ENCODE measurements at regions of chr2 and their contacts with region 1.

Region 1: DNA sequence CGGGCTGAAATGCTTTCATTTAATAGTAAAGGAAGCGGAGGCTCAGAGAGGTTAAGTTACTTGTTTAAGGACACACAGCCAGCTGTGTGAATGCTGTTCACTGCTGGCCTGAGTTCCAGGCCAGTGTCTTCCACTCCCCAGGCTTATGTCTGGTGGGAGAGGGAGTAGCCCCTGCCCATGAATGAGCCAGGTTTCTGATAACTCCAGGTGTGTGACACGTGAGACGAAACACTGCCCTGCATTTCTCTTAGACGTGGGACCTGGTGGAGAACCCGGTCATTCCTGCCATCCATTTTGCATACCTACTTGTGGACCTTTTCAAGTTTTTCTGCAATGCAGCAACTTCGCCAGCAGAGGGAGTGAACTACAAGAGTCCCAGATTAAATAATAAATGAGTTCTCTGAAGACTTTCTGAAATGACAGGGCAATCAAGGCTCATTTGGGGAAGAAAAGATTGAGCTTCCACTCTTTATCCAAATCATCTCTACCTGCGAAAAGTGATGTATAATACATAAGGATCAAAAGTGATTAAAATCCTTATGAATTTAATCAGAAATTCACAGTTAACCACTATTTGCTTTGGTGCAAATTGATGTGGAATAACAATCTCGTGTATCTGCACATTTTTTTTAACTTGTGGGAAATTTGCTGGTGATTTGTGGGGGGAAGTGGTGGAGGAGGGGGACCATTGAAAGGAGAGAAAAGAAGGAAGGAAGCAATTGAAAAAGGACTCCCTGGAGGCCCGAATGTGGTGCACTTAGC is 79.4 kb upstream of the ASB18 start:
- DNase-seq: peak in 1 of 2 donors; percentile 53
- H3K4me3 ChIP-seq: no peak overlapping the region
- H3K27ac ChIP-seq: no peak overlapping the region
- H3K4me1 ChIP-seq: no peaks in the 10 kb centered on the region
- H3K27me3 ChIP-seq: no peaks in the 10 kb centered on the region
- CTCF ChIP-seq: peak; percentile 28 to 79 (median 70)
- POLR2A ChIP-seq: no peak

Region 2: GRCh38 chr2:235195921-235196320 is 1147.7 kb before region 1 on chr2:
- intact Hi-C with region 1: loop called (anchors 5 kb)
- DNase-seq: no peak
- H3K4me3 ChIP-seq: no peak overlapping the region
- H3K27ac ChIP-seq: no peak overlapping the region
- H3K4me1 ChIP-seq: no peaks in the 10 kb centered on the region
- H3K27me3 ChIP-seq: peaks cover 0 to 4% of the 10 kb centered on the region in 2 donors
- CTCF ChIP-seq: no peak
- POLR2A ChIP-seq: no peak

Region 3: DNA sequence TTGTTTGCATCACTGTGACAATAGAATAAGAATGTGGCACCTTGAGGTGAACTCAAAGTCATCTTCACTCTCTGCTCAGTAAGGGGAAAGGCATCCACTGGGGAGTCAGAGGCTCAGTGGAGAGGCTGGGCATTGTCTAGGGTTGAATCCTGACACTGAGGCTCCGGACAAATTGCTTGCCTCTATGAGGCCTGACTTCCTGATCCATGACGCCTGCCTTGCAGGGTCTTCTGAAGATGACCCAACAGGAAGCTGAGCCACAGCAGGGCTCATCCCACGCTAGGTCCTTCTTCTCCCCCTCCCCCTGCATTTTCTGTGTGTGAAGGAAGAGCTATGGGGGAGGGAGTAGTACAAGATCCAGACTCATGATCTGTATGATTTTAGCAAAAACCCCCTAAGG is 1126.7 kb before region 1 on chr2:
- intact Hi-C with region 1: loop called (anchors 5 kb)
- DNase-seq: no peak
- H3K4me3 ChIP-seq: no peak overlapping the region
- H3K27ac ChIP-seq: no peak overlapping the region
- H3K4me1 ChIP-seq: no peaks in the 10 kb centered on the region
- H3K27me3 ChIP-seq: no peaks in the 10 kb centered on the region
- CTCF ChIP-seq: no peak
- POLR2A ChIP-seq: no peak

Region 4: GRCh38 chr2:236026841-236027240 is 316.7 kb before region 1 on chr2:
- intact Hi-C with region 1: no loop called
- DNase-seq: no peak
- H3K4me3 ChIP-seq: no peak overlapping the region
- H3K27ac ChIP-seq: no peak overlapping the region
- H3K4me1 ChIP-seq: no peaks in the 10 kb centered on the region
- H3K27me3 ChIP-seq: no peaks in the 10 kb centered on the region
- CTCF ChIP-seq: no peak
- POLR2A ChIP-seq: no peak